Head of caudate nucleus (tissue), 42 donors: ENCODE measurements at regions of chr1 and their contacts with region 1.

Region 1: GRCh38 chr1:151399890-151400495 is 620 bp downstream of the PSMB4 start:
- DNase-seq: peak in 8 of 42 donors; percentile 10 to 43 (median 16)

Region 2: DNA sequence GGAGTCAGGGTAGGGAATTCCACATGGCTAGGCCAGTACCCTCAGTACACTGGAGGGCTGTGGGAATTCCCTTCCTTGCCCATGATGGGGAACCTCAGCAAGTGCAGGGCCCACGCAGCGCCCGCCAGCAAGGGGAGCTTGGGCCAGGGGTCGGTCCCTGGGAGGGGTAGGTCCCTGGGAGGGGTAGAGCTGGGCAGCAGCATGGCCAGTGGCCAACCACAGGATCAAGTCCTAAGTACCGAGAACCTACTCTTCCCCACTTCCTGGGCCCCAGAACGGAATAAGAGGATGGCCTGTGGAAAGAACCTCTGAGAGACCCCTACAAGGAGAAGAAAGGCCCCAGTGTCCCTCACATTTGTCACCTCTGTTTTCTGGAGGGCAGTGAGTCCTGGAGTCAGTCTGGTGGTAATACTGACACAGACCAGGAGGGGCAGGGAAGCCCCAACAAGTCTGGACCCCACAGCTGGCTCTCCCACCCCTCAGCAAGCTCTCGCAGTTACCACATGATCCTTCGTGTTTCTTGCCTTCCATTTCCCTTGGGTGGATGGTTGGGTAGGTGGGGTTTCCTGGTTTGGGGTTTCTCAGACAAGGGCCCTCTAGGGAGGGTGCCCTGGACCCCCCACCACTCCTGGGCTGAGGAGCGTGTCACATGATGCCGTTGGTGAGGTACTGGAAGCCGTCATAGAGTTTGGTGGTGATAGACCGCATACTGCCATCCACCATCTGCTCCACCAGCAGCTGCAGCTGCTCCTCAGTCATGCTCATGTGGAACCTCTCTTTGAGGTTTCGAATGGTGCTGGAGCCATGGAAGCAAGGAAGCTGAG is 107.6 kb before region 1 on chr1:
- intact Hi-C with region 1: loop called (anchors 10 kb)
- DNase-seq: no peak

Region 3: GRCh38 chr1:151534665-151535278 is 134.8 kb after region 1 on chr1:
- intact Hi-C with region 1: no loop called
- DNase-seq: peak; percentile 56 to 93 (median 84)